Panc1 (cell line): ENCODE measurements at regions of chr17 and their contacts with region 1.

Region 1: GRCh38 chr17:78785011-78785662 is 3.1 kb upstream of the CYTH1 start:
- DNase-seq: no peak
- ATAC-seq: no peak
- H3K4me3 ChIP-seq: no peak overlapping the region
- H3K27ac ChIP-seq: no peak overlapping the region
- H3K4me1 ChIP-seq: peaks cover 4% of the 10 kb centered on the region
- H3K27me3 ChIP-seq: no peaks in the 10 kb centered on the region
- CTCF ChIP-seq: no peak

Region 2: GRCh38 chr17:78759203-78759968 is 25.8 kb before region 1 on chr17:
- CTCF ChIA-PET with region 1: no interaction called
- POLR2A ChIA-PET with region 1: no interaction called
- in situ Hi-C with region 1: no loop called
- intact Hi-C with region 1: no loop called
- DNase-seq: no peak
- ATAC-seq: no peak
- H3K4me3 ChIP-seq: no peak overlapping the region
- H3K27ac ChIP-seq: no peak overlapping the region
- H3K4me1 ChIP-seq: peaks cover 3% of the 10 kb centered on the region; the same call in 1 of the 2 replicates
- H3K27me3 ChIP-seq: no peaks in the 10 kb centered on the region
- CTCF ChIP-seq: no peak

Region 3: GRCh38 chr17:78820841-78821240 is 35.7 kb after region 1 on chr17:
- CTCF ChIA-PET with region 1: no interaction called
- POLR2A ChIA-PET with region 1: interaction called, 12 read pairs
- in situ Hi-C with region 1: no loop called
- intact Hi-C with region 1: no loop called
- DNase-seq: no peak
- ATAC-seq: no peak
- H3K4me3 ChIP-seq: no peak overlapping the region
- H3K27ac ChIP-seq: no peak overlapping the region
- H3K4me1 ChIP-seq: no peaks in the 10 kb centered on the region
- H3K27me3 ChIP-seq: no peaks in the 10 kb centered on the region
- CTCF ChIP-seq: no peak